CD4-positive, alpha-beta T cell (primary cell): ENCODE measurements at regions of chr14 and their contacts with region 1.

Region 1: GRCh38 chr14:52043690-52044089 is 25.2 kb downstream of the NID2 start:
- DNase-seq: peak in 8 of 14 experiments; percentile 13 to 58 (median 24)
- ATAC-seq: no peak
- H3K4me3 ChIP-seq: no peak overlapping the region
- H3K4me3 Mint-ChIP-seq: no peak overlapping the region
- H3K27ac ChIP-seq: no peak overlapping the region
- H3K27ac Mint-ChIP-seq: no peak overlapping the region
- H3K4me1 ChIP-seq: no peaks in the 10 kb centered on the region
- H3K4me1 Mint-ChIP-seq: no peaks in the 10 kb centered on the region
- H3K27me3 ChIP-seq: no peaks in the 10 kb centered on the region
- H3K27me3 Mint-ChIP-seq: no peaks in the 10 kb centered on the region
- CTCF ChIP-seq: peak; percentile 42

Region 2: GRCh38 chr14:52272375-52272774 is 228.7 kb after region 1 on chr14:
- CTCF ChIA-PET with region 1: no interaction called
- POLR2A ChIA-PET with region 1: no interaction called
- intact Hi-C with region 1: loop called in 1 of 2 experiments (anchors 10 kb)
- DNase-seq: peak in 4 of 14 experiments; percentile 12 to 74 (median 64)
- ATAC-seq: no peak
- H3K4me3 ChIP-seq: no peak overlapping the region
- H3K4me3 Mint-ChIP-seq: no peak overlapping the region
- H3K27ac ChIP-seq: no peak overlapping the region
- H3K27ac Mint-ChIP-seq: no peak overlapping the region
- H3K4me1 ChIP-seq: peaks cover 20% of the 10 kb centered on the region
- H3K4me1 Mint-ChIP-seq: peaks cover 12% of the 10 kb centered on the region
- H3K27me3 ChIP-seq: peaks cover 20 to 21% of the 10 kb centered on the region in 2 experiments
- H3K27me3 Mint-ChIP-seq: peaks cover 42% of the 10 kb centered on the region
- CTCF ChIP-seq: no peak